ENCODE measurements at regions of chr14 and their contacts with region 1.

Region 1: DNA sequence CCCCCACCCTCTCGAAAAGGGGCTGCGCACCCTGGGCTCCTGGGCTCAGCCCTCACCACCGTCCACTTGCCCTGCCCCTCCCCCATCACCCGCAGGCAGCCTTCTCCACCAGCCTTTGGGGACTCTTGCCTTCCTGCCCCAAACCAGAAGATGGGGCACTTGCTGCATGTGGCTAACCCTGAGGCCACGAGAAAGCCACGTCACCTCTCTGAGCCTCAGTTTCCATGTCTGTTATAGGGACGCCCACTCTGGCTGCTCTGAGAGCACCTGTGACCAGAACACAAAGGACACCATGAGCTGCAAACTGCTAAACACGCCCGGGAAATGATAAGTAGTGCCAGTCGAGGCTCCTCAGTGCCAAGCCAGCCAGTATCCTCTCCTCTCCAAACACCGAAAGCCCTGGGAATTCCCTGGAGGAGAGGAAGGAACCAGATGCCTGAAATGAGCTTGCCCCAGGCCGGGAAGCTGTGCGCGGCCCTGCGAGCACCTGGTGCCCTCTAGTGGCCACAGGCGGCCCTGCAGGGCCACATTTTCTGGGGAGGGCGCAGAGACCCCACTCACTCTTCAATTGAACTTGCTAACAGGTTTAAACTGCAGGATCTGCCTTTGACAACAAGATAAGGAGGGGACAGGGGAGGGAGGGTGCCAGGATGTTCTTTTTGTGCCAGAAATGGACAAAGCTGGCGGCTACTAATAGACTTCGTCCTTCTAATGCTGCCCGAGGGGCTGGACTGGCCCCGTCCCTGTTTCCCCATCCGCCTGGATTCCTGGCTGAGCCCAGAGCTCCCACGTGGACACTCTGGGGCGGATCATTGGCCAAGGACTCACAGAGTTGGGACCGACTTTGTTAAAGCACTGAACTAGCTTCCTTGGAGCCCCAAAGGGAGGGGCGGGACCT is 10.2 kb upstream of the SERPINA9 start:
- DNase-seq: peak; percentile 58
- ATAC-seq: peak; percentile 46
- H3K4me3 ChIP-seq: no peak overlapping the region
- H3K4me3 Mint-ChIP-seq: peak overlapping the region; percentile 56
- H3K27ac ChIP-seq: no peak overlapping the region
- H3K27ac Mint-ChIP-seq: no peak overlapping the region
- H3K4me1 ChIP-seq: peaks cover 0 to 13% of the 10 kb centered on the region in 2 donors
- H3K4me1 Mint-ChIP-seq: peaks cover 41% of the 10 kb centered on the region
- H3K27me3 ChIP-seq: peaks cover 0 to 14% (median 4%) of the 10 kb centered on the region in 4 experiments
- H3K27me3 Mint-ChIP-seq: peaks cover 29% of the 10 kb centered on the region
- CTCF ChIP-seq: peak; percentile 96

Region 2: DNA sequence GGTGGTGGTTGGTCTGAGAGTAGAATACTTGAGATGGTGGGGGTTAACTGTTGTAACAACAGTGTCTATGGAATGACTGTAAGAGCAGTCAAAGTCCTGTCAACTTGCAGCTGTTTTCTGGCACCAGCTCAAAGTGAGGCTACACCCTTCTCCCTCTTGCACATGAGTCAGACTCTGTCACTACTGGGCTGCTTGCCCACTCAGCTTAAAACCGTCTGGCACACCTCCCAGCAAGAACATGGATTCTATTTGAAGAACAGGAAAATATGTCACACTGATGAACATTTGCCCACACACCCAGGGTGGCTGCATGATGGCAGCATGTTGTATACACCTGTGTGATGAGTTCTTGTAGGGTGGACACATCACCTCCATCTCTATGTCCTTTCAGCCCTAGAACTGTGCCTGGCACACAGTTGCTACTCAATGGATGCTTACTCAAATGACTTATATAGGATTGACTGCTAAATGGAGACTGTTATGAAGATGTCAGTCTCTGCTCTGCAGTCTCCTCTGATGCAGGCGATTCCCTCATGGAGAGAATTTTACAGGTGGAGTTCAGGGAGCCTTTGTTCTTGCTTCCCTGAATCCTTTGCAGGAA is 143.8 kb before region 1 on chr14:
- CTCF ChIA-PET with region 1: no interaction called
- POLR2A ChIA-PET with region 1: no interaction called
- intact Hi-C with region 1: loop called (anchors 10 kb)
- DNase-seq: no peak
- ATAC-seq: no peak
- H3K4me3 ChIP-seq: no peak overlapping the region
- H3K4me3 Mint-ChIP-seq: no peak overlapping the region
- H3K27ac ChIP-seq: no peak overlapping the region
- H3K27ac Mint-ChIP-seq: no peak overlapping the region
- H3K4me1 ChIP-seq: peaks cover 0 to 15% of the 10 kb centered on the region in 2 donors
- H3K4me1 Mint-ChIP-seq: peaks cover 24% of the 10 kb centered on the region
- H3K27me3 ChIP-seq: no peaks in the 10 kb centered on the region
- H3K27me3 Mint-ChIP-seq: peaks cover 12% of the 10 kb centered on the region
- CTCF ChIP-seq: no peak

Region 3: GRCh38 chr14:94423453-94424056 is 62.6 kb before region 1 on chr14:
- CTCF ChIA-PET with region 1: interaction called, 30 read pairs
- POLR2A ChIA-PET with region 1: no interaction called
- intact Hi-C with region 1: loop called (anchors 1 kb)
- DNase-seq: peak; percentile 39
- ATAC-seq: no peak
- H3K4me3 ChIP-seq: no peak overlapping the region
- H3K4me3 Mint-ChIP-seq: no peak overlapping the region
- H3K27ac ChIP-seq: no peak overlapping the region
- H3K27ac Mint-ChIP-seq: no peak overlapping the region
- H3K4me1 ChIP-seq: no peaks in the 10 kb centered on the region
- H3K4me1 Mint-ChIP-seq: peaks cover 1% of the 10 kb centered on the region
- H3K27me3 ChIP-seq: peaks cover 0 to 8% (median 0%) of the 10 kb centered on the region in 4 experiments
- H3K27me3 Mint-ChIP-seq: peaks cover 15% of the 10 kb centered on the region
- CTCF ChIP-seq: peak; percentile 63

Region 4: DNA sequence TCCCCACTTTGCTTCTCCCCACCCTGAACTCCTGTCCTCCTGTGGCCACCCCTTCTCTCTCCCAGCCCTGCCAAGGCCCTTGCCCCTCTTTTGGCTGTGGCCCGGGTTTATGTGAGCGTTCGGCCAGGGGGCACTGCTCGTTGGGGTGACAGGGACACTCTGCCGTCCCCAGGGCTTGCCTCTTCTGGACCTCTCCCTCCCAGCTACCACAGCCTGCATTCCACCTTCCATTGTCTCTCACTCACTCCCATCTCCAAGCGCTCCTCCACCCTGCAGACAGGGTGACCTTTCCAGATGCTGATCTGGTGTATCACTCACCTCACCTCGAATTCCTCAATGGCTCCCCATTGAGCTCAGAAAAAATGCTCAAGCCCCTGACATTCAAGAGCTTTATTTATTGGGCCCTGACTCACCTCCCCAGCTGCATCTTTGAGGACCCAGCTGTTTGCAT is 11.6 kb before region 1 on chr14:
- CTCF ChIA-PET with region 1: interaction called, 50 read pairs
- POLR2A ChIA-PET with region 1: no interaction called
- intact Hi-C with region 1: no loop called
- DNase-seq: no peak
- ATAC-seq: no peak
- H3K4me3 ChIP-seq: no peak overlapping the region
- H3K4me3 Mint-ChIP-seq: no peak overlapping the region
- H3K27ac ChIP-seq: no peak overlapping the region
- H3K27ac Mint-ChIP-seq: no peak overlapping the region
- H3K4me1 ChIP-seq: peaks cover 0 to 26% of the 10 kb centered on the region in 2 donors
- H3K4me1 Mint-ChIP-seq: peaks cover 24% of the 10 kb centered on the region
- H3K27me3 ChIP-seq: peaks cover 0 to 6% (median 0%) of the 10 kb centered on the region in 4 experiments
- H3K27me3 Mint-ChIP-seq: no peaks in the 10 kb centered on the region
- CTCF ChIP-seq: no peak

Region 5: DNA sequence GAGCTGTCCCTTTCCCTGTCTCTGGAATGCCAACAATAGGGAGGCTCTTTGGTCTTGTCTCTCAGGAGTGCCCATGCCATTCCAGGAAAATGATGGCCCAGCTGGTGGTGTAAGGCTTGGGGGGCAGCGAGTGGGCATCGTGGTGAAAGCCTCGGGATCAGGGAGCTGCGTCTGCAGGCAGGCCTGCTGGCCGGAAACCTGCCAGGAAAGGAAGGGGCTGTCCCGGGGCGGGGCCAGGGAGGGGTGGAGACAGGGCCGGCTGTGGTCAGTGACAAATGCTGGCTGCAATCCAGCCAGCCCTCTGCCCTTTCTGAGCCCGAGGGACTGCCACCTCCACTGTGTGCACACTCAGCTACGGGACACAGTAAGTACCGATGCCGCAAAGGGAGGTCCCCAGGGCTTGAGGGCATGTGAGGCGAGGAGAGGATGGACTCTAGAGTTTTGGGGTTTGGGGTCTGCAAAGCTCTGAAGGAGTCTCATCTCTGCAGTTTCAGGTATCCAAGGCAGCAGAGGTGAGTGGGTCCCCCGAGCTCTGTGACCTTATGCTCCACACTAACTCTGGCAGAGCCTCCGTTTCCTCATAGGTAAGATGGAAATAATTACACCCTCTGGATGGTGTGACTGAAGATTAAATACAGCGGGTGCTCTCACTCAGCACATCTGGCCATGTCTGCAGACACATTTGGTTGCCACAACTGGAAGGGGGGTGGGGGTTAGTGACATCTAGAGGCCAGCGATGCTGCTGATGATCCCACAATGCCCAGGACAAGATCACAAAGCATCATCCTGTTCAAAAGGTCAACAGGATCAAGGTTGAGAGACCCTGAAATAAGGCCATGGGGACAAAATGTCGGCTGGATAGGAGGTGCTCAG is 95.2 kb after region 1 on chr14 and contains the start of gene SERPINA5:
- CTCF ChIA-PET with region 1: no interaction called
- POLR2A ChIA-PET with region 1: no interaction called
- intact Hi-C with region 1: no loop called
- DNase-seq: no peak
- ATAC-seq: no peak
- H3K4me3 ChIP-seq: no peak within 1 kb of the TSS
- H3K4me3 Mint-ChIP-seq: no peak within 1 kb of the TSS
- H3K27ac ChIP-seq: no peak within 1 kb of the TSS
- H3K27ac Mint-ChIP-seq: no peak within 1 kb of the TSS
- H3K4me1 ChIP-seq: no peaks in the 10 kb centered on the region
- H3K4me1 Mint-ChIP-seq: no peaks in the 10 kb centered on the region
- H3K27me3 ChIP-seq: no peaks in the 10 kb centered on the region
- H3K27me3 Mint-ChIP-seq: peaks cover 3% of the 10 kb centered on the region
- CTCF ChIP-seq: no peak
- total RNA-seq, gene SERPINA5: not detected in 2 replicates